Activated T-helper 1 cell treated with anti-CD3 and anti-CD28 coated beads, Interleukin-12 subunit alpha, Interleukin-12 subunit beta, Interleukin-2, Interleukin-4 antibody, amounts not matched to agents 30 ng/mL and 10 ng/mL and 1 ng/mL, durations not matched to agents 14 hours and 24 hours and 36 hours (primary cell): ENCODE measurements at regions of chr1 and their contacts with region 1.

Region 1: GRCh38 chr1:10398734-10399623 is at the start of gene PGD:
- DNase-seq: peak; percentile 98
- H3K4me3 Mint-ChIP-seq: peak within 1 kb of the TSS; percentile 92
- H3K27ac Mint-ChIP-seq: peak within 1 kb of the TSS; percentile 77
- H3K4me1 Mint-ChIP-seq: peaks cover 25% of the 10 kb centered on the region
- H3K27me3 Mint-ChIP-seq: no peaks in the 10 kb centered on the region
- total RNA-seq, gene PGD: 131 and 142 TPM in 2 replicates

Region 2: DNA sequence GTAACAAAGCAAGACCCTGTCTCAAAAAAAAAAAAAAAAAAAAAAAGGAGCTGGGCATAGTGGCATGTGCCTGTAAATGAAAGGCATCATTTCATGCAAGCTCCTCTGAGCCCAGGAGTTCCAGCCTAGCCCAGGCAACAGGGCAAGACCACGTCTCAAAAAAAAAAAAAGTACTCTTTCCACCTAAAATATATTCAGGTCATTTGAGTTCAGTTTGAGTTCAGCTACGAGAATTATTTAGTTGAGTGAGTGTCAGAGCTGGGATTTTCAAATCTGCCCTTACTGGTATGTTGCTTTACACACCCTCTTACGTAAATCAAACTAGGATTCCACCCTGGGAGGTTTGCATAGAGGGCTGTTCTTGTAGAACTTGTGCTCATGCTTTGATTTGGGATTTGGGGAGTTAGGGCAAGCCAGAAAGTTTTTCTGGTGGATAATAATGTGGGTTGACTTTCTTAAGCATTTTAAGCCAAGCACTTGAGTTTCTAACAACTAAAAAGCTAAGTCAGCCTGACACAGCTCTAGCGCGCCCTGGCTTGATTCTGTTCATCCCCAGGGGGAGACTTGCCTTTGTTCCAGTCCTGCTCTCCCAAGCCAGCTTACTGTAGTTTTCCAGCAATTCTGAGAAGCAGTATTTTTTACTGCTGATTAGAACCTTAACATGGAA is 11.4 kb before region 1 on chr1:
- intact Hi-C with region 1: loop called (anchors 1 kb)
- DNase-seq: no peak
- H3K4me3 Mint-ChIP-seq: no peak overlapping the region
- H3K27ac Mint-ChIP-seq: no peak overlapping the region
- H3K4me1 Mint-ChIP-seq: peaks cover 10% of the 10 kb centered on the region
- H3K27me3 Mint-ChIP-seq: no peaks in the 10 kb centered on the region

Region 3: GRCh38 chr1:10472220-10473144 is 73.5 kb after region 1 on chr1 and contains the start of gene DFFA:
- intact Hi-C with region 1: loop called (anchors 1 kb)
- DNase-seq: peak; percentile 90
- H3K4me3 Mint-ChIP-seq: peak within 1 kb of the TSS; percentile 89
- H3K27ac Mint-ChIP-seq: peak within 1 kb of the TSS; percentile 85
- H3K4me1 Mint-ChIP-seq: peaks cover 45% of the 10 kb centered on the region
- H3K27me3 Mint-ChIP-seq: no peaks in the 10 kb centered on the region
- total RNA-seq, gene DFFA: 54.7 and 60.1 TPM in 2 replicates